ENCODE measurements at regions of chr19 and their contacts with region 1.

Region 1: DNA sequence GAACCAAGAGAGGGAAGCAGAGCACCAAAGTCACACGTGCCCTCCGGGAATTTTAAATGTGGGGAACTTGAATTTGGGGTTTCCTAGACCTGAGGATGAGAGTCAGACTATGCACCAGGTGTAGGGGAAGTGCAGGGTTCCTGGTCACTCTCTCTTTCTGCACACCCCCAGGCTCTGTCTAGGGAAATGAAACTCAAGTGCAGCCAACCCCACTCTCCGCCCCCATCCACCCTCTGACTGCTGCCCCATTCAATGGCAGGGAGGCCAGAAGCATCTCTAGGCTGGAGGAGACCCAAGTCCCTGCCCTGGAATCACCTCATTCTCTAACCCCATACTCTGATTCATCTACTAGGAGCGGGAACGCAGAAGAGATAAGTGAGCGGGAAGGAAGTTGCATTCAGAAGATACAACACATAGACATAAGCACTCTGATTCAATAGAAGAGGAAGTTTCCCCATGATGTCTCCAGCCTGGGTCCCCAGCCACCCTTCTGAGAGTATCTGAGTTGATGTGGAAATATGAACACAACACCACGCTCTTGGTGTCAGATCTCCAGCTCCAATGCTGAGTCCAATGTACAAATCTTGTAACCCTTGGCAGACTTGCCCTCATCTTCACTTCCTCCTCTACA is 4.7 kb upstream of the SIGLEC14 start:
- DNase-seq: no peak
- H3K4me3 ChIP-seq: no peak overlapping the region
- H3K27ac ChIP-seq: no peak overlapping the region
- H3K4me1 ChIP-seq: no peaks in the 10 kb centered on the region
- H3K27me3 ChIP-seq: no peaks in the 10 kb centered on the region
- CTCF ChIP-seq: no peak

Region 2: DNA sequence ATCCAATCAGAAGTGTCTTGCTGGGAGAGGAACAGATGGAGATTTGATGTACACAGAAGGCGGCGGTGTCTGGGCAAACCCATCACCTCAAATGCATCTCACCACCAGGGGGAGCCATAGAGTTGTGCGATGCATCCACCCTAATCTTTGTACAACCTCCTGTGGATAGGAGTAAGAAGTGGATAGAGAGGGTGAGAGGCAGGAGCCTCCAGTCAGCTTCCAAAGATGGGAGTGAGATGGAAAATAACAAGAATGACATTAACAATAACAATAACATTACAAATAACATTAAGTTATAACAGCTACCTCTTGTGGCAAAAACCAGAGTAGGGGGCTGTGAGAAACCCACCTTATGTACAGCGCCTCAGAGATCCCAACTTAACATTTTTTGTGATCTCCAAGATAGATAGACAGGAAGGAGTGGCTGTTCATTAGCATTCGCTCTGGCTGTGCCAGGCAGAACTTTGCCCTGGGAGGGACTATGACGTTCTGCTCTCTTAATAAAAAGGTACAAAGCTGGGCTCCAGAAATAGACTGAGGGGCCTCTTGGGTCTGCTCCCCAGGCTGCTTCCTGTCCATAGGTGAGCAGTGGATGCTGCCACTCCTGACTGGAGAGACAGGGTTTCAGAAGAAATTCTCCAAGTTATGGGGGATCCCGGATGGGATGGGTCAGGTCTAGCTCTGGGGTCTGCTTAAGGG is 178.2 kb before region 1 on chr19:
- intact Hi-C with region 1: loop called (anchors 5 kb)
- DNase-seq: peak; percentile 83
- H3K4me3 ChIP-seq: no peak overlapping the region
- H3K27ac ChIP-seq: no peak overlapping the region
- H3K4me1 ChIP-seq: no peaks in the 10 kb centered on the region
- H3K27me3 ChIP-seq: no peaks in the 10 kb centered on the region
- CTCF ChIP-seq: peak; percentile 82

Region 3: DNA sequence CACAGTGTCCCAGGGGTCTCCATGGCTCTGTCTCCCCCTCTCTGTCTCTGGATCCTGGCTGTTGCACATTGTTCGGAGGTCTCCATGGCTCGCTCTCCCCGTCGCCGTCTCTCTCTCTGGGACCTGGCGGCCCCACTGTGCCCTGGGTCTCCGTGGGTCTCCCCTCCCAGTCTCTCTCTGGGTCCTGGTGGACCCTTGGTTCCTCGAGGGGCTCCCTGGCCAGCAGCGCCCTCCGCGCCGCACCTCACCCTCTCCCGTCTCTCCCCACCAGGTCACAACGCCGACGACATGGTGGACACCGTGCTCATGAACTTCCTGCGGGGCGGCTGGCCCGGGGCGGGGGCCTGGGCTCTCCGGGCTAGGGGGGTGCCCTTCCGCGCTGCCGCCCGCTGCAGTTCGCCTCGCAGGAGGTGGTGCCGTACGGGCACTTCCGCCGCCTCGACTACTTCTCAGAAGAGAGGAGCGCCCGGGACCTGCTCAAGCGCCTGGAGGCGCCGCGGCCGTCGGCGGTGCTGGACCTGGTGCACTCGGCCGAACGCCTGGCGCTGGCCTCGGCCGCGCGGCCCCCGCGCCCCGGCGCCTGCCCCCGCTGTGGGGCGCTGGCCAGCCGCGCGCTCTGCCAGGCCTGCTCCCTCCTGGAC is 50.3 kb before region 1 on chr19:
- intact Hi-C with region 1: no loop called
- DNase-seq: no peak
- H3K4me3 ChIP-seq: no peak overlapping the region
- H3K27ac ChIP-seq: no peak overlapping the region
- H3K4me1 ChIP-seq: no peaks in the 10 kb centered on the region
- H3K27me3 ChIP-seq: no peaks in the 10 kb centered on the region
- CTCF ChIP-seq: no peak

Region 4: GRCh38 chr19:51777570-51778462 is 126.5 kb after region 1 on chr19:
- intact Hi-C with region 1: loop called (anchors 10 kb)
- DNase-seq: peak; percentile 47
- H3K4me3 ChIP-seq: no peak overlapping the region
- H3K27ac ChIP-seq: no peak overlapping the region
- H3K4me1 ChIP-seq: no peaks in the 10 kb centered on the region
- H3K27me3 ChIP-seq: no peaks in the 10 kb centered on the region
- CTCF ChIP-seq: peak; percentile 58

Region 5: GRCh38 chr19:51931941-51932340 is 280.6 kb after region 1 on chr19:
- intact Hi-C with region 1: no loop called
- DNase-seq: no peak
- H3K4me3 ChIP-seq: no peak overlapping the region
- H3K27ac ChIP-seq: no peak overlapping the region
- H3K4me1 ChIP-seq: peaks cover 6% of the 10 kb centered on the region
- H3K27me3 ChIP-seq: no peaks in the 10 kb centered on the region
- CTCF ChIP-seq: no peak

Measured in colonic mucosa (tissue), 4 donors.